Activated CD4-positive, alpha-beta T cell treated with anti-CD3 and anti-CD28 coated beads for 36 hours (primary cell): ENCODE measurements at regions of chr12 and their contacts with region 1.

Region 1: DNA sequence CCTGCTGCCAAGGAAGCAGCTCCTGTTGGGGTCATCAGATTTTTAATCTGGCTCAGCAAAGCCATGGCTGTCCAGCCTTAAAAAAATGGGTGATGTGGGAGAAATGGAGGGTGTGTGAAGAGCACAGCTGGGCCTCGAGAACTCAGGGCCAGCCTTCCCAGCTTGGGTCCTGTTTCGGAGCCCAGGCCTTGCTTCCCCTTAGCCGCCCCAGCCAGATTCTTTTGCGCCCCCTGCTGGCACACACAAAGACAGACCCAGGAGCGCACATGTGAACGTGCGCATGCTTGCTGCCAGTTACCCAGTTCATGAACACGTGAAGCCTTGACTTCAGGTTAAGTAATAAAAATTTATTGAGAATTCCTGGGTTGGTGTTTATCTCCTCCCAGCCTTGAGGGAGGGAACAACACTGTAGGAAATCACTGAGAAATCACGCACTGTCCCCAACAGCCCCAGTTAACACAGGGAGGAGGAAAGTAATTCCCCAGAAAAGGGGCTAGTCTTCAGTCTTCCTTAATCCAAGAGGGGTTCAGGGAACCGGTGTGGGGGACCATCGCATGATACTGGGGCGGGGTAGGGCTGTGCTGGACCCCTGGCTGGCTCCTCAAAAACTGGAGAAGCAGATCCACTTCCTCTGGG is 5.3 kb downstream of the PHB2 start:
- DNase-seq: peak; percentile 95
- ATAC-seq: peak; percentile 48
- H3K4me3 Mint-ChIP-seq: no peak overlapping the region
- H3K27ac Mint-ChIP-seq: peak overlapping the region; percentile 94
- H3K4me1 Mint-ChIP-seq: peaks cover 76% of the 10 kb centered on the region
- H3K27me3 Mint-ChIP-seq: no peaks in the 10 kb centered on the region

Region 2: DNA sequence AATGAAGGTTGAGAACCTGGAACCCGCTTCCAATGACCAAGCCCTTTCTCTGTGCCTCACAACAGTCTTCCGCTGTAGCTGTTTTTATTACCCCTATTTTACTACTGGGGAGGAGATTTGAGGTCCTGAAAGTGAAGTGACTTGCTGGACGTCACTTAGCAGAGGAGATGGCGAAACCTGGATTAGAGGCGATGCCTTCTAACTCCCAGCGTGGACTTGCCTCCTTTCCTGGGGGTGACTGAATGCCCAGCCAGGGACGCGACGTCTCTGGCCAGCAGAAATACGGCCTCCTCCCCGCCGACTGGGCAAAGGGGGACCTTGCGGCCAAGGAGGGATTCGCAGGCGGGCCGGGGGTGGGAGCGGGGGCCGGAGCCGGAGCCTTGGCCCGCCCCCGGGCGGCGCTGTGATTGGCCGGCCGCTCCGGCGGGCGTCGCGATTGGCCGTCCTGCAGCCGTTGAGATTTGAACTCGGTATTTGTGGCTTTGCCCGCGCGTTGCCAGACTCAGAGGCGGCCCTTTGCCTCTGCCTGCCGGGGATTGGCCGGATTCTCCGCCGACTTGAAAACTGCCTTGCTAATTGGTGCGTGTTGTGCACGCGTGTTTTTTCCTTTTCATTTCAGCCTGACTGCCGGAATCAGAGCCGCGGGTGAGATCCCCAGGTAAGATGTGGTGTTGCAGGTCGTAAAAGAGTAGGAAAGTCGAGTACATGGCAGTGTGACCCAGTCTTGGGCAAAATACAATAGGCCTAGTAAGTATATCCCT is 471.5 kb before region 1 on chr12 and contains the start of gene NCAPD2:
- CTCF ChIA-PET with region 1: interaction called, 3 read pairs
- POLR2A ChIA-PET with region 1: no interaction called
- intact Hi-C with region 1: loop called in 1 of 2 experiments (anchors 1 kb)
- DNase-seq: peak; percentile 98
- ATAC-seq: peak; percentile 89
- H3K4me3 Mint-ChIP-seq: peak within 1 kb of the TSS; percentile 94
- H3K27ac Mint-ChIP-seq: peak within 1 kb of the TSS; percentile 98
- H3K4me1 Mint-ChIP-seq: peaks cover 35% of the 10 kb centered on the region
- H3K27me3 Mint-ChIP-seq: no peaks in the 10 kb centered on the region
- total RNA-seq, gene NCAPD2: 199 to 210 TPM

Region 3: GRCh38 chr12:6752921-6753771 is 212.0 kb before region 1 on chr12 and contains the start of gene MLF2:
- CTCF ChIA-PET with region 1: no interaction called
- POLR2A ChIA-PET with region 1: no interaction called
- intact Hi-C with region 1: loop called in 1 of 2 experiments (anchors 1 kb)
- DNase-seq: peak; percentile 99
- ATAC-seq: peak; percentile 96
- H3K4me3 Mint-ChIP-seq: peak within 1 kb of the TSS; percentile 87
- H3K27ac Mint-ChIP-seq: peak within 1 kb of the TSS; percentile 97
- H3K4me1 Mint-ChIP-seq: peaks cover 26% of the 10 kb centered on the region
- H3K27me3 Mint-ChIP-seq: no peaks in the 10 kb centered on the region
- total RNA-seq, gene MLF2: 142 to 144 TPM

Region 4: GRCh38 chr12:6873094-6874014 is 91.8 kb before region 1 on chr12 and contains the start of gene SPSB2:
- CTCF ChIA-PET with region 1: interaction called, 5 read pairs
- POLR2A ChIA-PET with region 1: interaction called, 3 read pairs
- intact Hi-C with region 1: loop called (anchors 1 to 5 kb)
- DNase-seq: peak; percentile 100
- ATAC-seq: peak; percentile 74
- H3K4me3 Mint-ChIP-seq: peak within 1 kb of the TSS; percentile 93
- H3K27ac Mint-ChIP-seq: peak within 1 kb of the TSS; percentile 86
- H3K4me1 Mint-ChIP-seq: peaks cover 50% of the 10 kb centered on the region
- H3K27me3 Mint-ChIP-seq: no peaks in the 10 kb centered on the region
- total RNA-seq, gene SPSB2: 1.7 to 2.2 TPM

Region 5: GRCh38 chr12:6927379-6928024 is 37.6 kb before region 1 on chr12 and contains the start of gene ATN1:
- CTCF ChIA-PET with region 1: interaction called, 15 read pairs
- POLR2A ChIA-PET with region 1: interaction called, 3 read pairs
- intact Hi-C with region 1: loop called (anchors 1 to 2 kb)
- DNase-seq: peak; percentile 69
- ATAC-seq: peak; percentile 31
- H3K4me3 Mint-ChIP-seq: peak within 1 kb of the TSS; percentile 83
- H3K27ac Mint-ChIP-seq: peak within 1 kb of the TSS; percentile 84
- H3K4me1 Mint-ChIP-seq: peaks cover 58% of the 10 kb centered on the region
- H3K27me3 Mint-ChIP-seq: no peaks in the 10 kb centered on the region
- total RNA-seq, gene ATN1: 32.2 to 32.4 TPM

Region 6: GRCh38 chr12:6953442-6954315 is 11.5 kb before region 1 on chr12:
- CTCF ChIA-PET with region 1: interaction called, 237 read pairs
- POLR2A ChIA-PET with region 1: interaction called, 11 read pairs
- intact Hi-C with region 1: loop called (anchors 1 kb)
- DNase-seq: peak; percentile 87
- ATAC-seq: peak; percentile 33
- H3K4me3 Mint-ChIP-seq: peak overlapping the region; percentile 95
- H3K27ac Mint-ChIP-seq: peak overlapping the region; percentile 97
- H3K4me1 Mint-ChIP-seq: peaks cover 70% of the 10 kb centered on the region
- H3K27me3 Mint-ChIP-seq: no peaks in the 10 kb centered on the region

Region 7: GRCh38 chr12:7188562-7189397 is 223.6 kb after region 1 on chr12:
- CTCF ChIA-PET with region 1: no interaction called
- POLR2A ChIA-PET with region 1: no interaction called
- intact Hi-C with region 1: loop called in 1 of 2 experiments (anchors 1 kb)
- DNase-seq: peak; percentile 88
- ATAC-seq: peak; percentile 64
- H3K4me3 Mint-ChIP-seq: peak overlapping the region; percentile 85
- H3K27ac Mint-ChIP-seq: peak overlapping the region; percentile 94
- H3K4me1 Mint-ChIP-seq: peaks cover 35% of the 10 kb centered on the region
- H3K27me3 Mint-ChIP-seq: no peaks in the 10 kb centered on the region